GM12878 (cell line): ENCODE measurements at regions of chr3 and their contacts with region 1.

Region 1: GRCh38 chr3:40580494-40581091 is 55.8 kb downstream of the ZNF621 start:
- DNase-seq: no peak
- ATAC-seq: peak; percentile 85
- H3K4me3 ChIP-seq: no peak overlapping the region
- H3K27ac ChIP-seq: no peak overlapping the region
- H3K4me1 ChIP-seq: no peaks in the 10 kb centered on the region
- H3K27me3 ChIP-seq: no peaks in the 10 kb centered on the region; a peak in 2 of 4 replicates
- CTCF ChIP-seq: peak; percentile 91 to 96 (median 93); a peak in 5 of 6 replicates
- EP300 ChIP-seq: no peak
- POLR2A ChIP-seq: no peak
- RAD21 ChIP-seq: peak; percentile 99

Region 2: GRCh38 chr3:40550167-40550566 is 30.4 kb before region 1 on chr3:
- CTCF ChIA-PET with region 1: no interaction called
- POLR2A ChIA-PET with region 1: no interaction called
- RAD21 ChIA-PET with region 1: no interaction called
- SMC1A ChIA-PET with region 1: no interaction called
- in situ Hi-C with region 1: no loop called
- intact Hi-C with region 1: no loop called
- DNase-seq: no peak
- ATAC-seq: no peak
- H3K4me3 ChIP-seq: no peak overlapping the region
- H3K27ac ChIP-seq: no peak overlapping the region
- H3K4me1 ChIP-seq: no peaks in the 10 kb centered on the region
- H3K27me3 ChIP-seq: no peaks in the 10 kb centered on the region
- CTCF ChIP-seq: no peak
- EP300 ChIP-seq: no peak
- POLR2A ChIP-seq: no peak
- RAD21 ChIP-seq: no peak

Region 3: DNA sequence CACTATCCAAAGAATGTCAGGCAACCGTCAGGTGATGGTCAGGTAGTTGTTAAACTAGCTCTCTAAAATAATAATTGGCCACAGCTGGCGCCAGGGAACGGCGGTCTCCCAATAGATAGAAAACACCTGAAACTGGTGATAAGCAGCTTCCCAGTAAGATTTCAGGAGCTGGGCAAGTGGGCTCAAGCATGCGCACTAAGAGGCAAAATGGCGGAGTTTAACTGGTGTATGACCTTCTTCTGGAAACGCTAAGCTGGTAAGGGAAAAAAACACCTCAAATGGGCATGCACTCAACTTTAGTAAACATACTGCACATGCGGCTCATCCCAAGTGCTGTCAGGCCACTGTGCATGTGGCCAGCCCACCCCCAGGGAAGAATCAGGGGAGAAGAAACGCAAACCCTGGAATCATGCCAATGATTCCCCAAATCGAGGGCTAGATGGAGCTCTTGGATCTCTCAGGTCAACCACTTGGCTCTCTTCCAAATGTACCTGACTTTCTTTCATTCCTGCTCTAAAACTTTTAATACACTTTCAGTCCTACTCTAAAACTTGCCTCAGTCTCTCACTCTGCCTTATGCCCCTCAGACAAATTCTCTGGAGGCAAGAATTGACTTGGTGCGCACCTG is 139.2 kb after region 1 on chr3:
- CTCF ChIA-PET with region 1: no interaction called
- POLR2A ChIA-PET with region 1: no interaction called
- RAD21 ChIA-PET with region 1: no interaction called
- SMC1A ChIA-PET with region 1: no interaction called
- in situ Hi-C with region 1: no loop called
- intact Hi-C with region 1: loop called (anchors 10 kb)
- DNase-seq: no peak
- ATAC-seq: no peak
- H3K4me3 ChIP-seq: no peak overlapping the region
- H3K27ac ChIP-seq: no peak overlapping the region
- H3K4me1 ChIP-seq: peaks cover 10% of the 10 kb centered on the region
- H3K27me3 ChIP-seq: no peaks in the 10 kb centered on the region
- CTCF ChIP-seq: 0 out of 6 replicates have a peak, but pooled peaks of 1 of the 3 experiments have one; percentile 3
- EP300 ChIP-seq: no peak
- POLR2A ChIP-seq: no peak
- RAD21 ChIP-seq: no peak

Region 4: GRCh38 chr3:41234823-41235721 is 654.5 kb after region 1 on chr3:
- CTCF ChIA-PET with region 1: interaction called, 4 read pairs
- POLR2A ChIA-PET with region 1: no interaction called
- RAD21 ChIA-PET with region 1: no interaction called
- SMC1A ChIA-PET with region 1: no interaction called
- in situ Hi-C with region 1: no loop called
- intact Hi-C with region 1: loop called (anchors 10 kb)
- DNase-seq: no peak
- ATAC-seq: no peak
- H3K4me3 ChIP-seq: no peak overlapping the region
- H3K27ac ChIP-seq: no peak overlapping the region
- H3K4me1 ChIP-seq: no peaks in the 10 kb centered on the region
- H3K27me3 ChIP-seq: no peaks in the 10 kb centered on the region
- CTCF ChIP-seq: no peak
- EP300 ChIP-seq: no peak
- POLR2A ChIP-seq: no peak
- RAD21 ChIP-seq: no peak

Region 5: GRCh38 chr3:41881233-41881821 is 1300.7 kb after region 1 on chr3:
- CTCF ChIA-PET with region 1: interaction called, 103 read pairs
- POLR2A ChIA-PET with region 1: interaction called, 5 read pairs
- RAD21 ChIA-PET with region 1: interaction called, 6 read pairs
- SMC1A ChIA-PET with region 1: interaction called, 9 read pairs
- in situ Hi-C with region 1: loop called (anchors 5 kb)
- intact Hi-C with region 1: loop called (anchors 1 kb)
- DNase-seq: no peak
- ATAC-seq: no peak
- H3K4me3 ChIP-seq: no peak overlapping the region
- H3K27ac ChIP-seq: no peak overlapping the region
- H3K4me1 ChIP-seq: no peaks in the 10 kb centered on the region
- H3K27me3 ChIP-seq: no peaks in the 10 kb centered on the region
- CTCF ChIP-seq: peak; percentile 44 to 58 (median 57); a peak in 5 of 6 replicates
- EP300 ChIP-seq: no peak
- POLR2A ChIP-seq: no peak
- RAD21 ChIP-seq: peak; percentile 81